PC-9 (cell line): ENCODE measurements at regions of chr13 and their contacts with region 1.

Region 1: DNA sequence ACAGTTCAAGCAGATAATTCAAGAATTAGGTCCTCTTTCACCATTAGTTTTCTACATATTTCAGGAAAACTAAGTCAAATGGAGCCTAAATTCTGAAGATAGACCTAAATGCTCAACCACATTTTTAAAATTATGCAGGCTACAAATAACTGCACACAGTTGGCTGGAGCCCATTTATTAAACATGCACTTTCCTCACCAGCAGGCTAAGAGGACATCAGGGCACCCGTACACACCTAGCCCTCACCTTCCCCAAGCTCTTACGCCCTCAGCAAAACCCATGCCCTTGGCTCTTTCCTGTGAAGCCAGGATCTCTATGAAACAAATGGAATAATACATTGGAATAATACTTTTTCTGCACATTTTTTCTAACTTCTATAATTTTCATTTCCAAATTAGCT is 18.2 kb downstream of the IRS2 start:
- DNase-seq: no peak
- H3K4me3 ChIP-seq: no peak overlapping the region
- H3K27ac ChIP-seq: 0 out of 2 replicates have a peak overlapping the region, but pooled peaks have one; percentile 3
- H3K4me1 ChIP-seq: peaks cover 42% of the 10 kb centered on the region
- H3K27me3 ChIP-seq: no peaks in the 10 kb centered on the region
- CTCF ChIP-seq: no peak

Region 2: DNA sequence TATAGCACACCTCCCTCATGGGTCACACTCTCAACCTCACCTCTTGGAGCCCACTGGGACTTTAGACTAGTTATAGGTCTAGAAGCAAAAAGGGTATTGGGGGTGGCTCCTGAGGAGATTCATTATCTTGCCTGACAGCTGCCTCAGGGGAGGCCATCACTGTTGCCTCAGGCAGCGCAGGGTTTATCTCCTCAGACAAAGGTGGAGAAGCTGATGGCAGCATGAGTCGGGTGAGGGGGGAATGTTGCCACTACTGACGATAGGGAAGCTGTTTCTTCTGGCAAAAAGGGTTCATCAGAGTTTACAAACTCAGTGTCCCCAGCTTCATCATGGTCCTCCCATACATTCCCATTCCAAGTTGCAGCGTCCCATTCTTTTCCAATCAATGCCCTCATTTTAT is 544.1 kb before region 1 on chr13:
- CTCF ChIA-PET with region 1: no interaction called
- POLR2A ChIA-PET with region 1: no interaction called
- intact Hi-C with region 1: no loop called
- DNase-seq: no peak
- H3K4me3 ChIP-seq: no peak overlapping the region
- H3K27ac ChIP-seq: no peak overlapping the region
- H3K4me1 ChIP-seq: no peaks in the 10 kb centered on the region
- H3K27me3 ChIP-seq: no peaks in the 10 kb centered on the region
- CTCF ChIP-seq: no peak

Region 3: DNA sequence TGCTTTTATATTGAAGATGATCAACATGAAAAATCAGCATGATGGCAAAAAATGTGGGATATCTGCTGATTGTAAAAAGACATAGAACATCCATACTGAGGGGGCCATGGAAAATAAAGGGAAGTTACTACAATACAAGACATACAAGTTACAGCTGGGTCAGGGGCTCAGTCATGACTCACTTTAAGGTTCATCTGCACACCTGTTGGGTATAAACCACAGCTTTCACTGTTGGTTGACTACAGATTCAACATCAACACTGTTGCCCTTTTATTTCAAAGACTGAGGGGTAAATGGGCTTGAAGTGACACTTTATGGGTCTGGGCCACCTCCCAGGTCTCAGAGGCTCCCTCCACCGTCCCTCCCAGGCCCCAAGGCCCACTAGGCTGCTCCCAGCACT is 116.3 kb after region 1 on chr13:
- CTCF ChIA-PET with region 1: no interaction called
- POLR2A ChIA-PET with region 1: interaction called, 33 read pairs
- intact Hi-C with region 1: no loop called
- DNase-seq: no peak
- H3K4me3 ChIP-seq: no peak overlapping the region
- H3K27ac ChIP-seq: no peak overlapping the region
- H3K4me1 ChIP-seq: no peaks in the 10 kb centered on the region
- H3K27me3 ChIP-seq: no peaks in the 10 kb centered on the region
- CTCF ChIP-seq: no peak